ENCODE measurements at regions of chr5 and their contacts with region 1.

Region 1: GRCh38 chr5:179763215-179763945 is 30.4 kb upstream of the LTC4S start:
- DNase-seq: peak; percentile 77
- ATAC-seq: peak; percentile 82
- H3K4me3 ChIP-seq: no peak overlapping the region
- H3K27ac ChIP-seq: no peak overlapping the region
- H3K4me1 ChIP-seq: peaks cover 27% of the 10 kb centered on the region
- H3K27me3 ChIP-seq: no peaks in the 10 kb centered on the region
- CTCF ChIP-seq: peak; percentile 80
- EP300 ChIP-seq: no peak
- POLR2A ChIP-seq: no peak
- RAD21 ChIP-seq: peak; percentile 65

Region 2: GRCh38 chr5:179732417-179732917 is 30.9 kb before region 1 on chr5 and contains the start of gene MAML1:
- CTCF ChIA-PET with region 1: no interaction called
- POLR2A ChIA-PET with region 1: interaction called, 11 read pairs
- in situ Hi-C with region 1: no loop called
- intact Hi-C with region 1: no loop called
- DNase-seq: peak; percentile 99
- ATAC-seq: peak; percentile 94
- H3K4me3 ChIP-seq: peak within 1 kb of the TSS; percentile 93 to 98 (median 96)
- H3K27ac ChIP-seq: peak within 1 kb of the TSS; percentile 88
- H3K4me1 ChIP-seq: peaks cover 55% of the 10 kb centered on the region
- H3K27me3 ChIP-seq: no peaks in the 10 kb centered on the region
- CTCF ChIP-seq: no peak
- EP300 ChIP-seq: no peak
- POLR2A ChIP-seq: peak; percentile 51 to 61
- RAD21 ChIP-seq: no peak
- total RNA-seq, gene MAML1: 10.0 and 12.1 TPM in 2 replicates

Region 3: DNA sequence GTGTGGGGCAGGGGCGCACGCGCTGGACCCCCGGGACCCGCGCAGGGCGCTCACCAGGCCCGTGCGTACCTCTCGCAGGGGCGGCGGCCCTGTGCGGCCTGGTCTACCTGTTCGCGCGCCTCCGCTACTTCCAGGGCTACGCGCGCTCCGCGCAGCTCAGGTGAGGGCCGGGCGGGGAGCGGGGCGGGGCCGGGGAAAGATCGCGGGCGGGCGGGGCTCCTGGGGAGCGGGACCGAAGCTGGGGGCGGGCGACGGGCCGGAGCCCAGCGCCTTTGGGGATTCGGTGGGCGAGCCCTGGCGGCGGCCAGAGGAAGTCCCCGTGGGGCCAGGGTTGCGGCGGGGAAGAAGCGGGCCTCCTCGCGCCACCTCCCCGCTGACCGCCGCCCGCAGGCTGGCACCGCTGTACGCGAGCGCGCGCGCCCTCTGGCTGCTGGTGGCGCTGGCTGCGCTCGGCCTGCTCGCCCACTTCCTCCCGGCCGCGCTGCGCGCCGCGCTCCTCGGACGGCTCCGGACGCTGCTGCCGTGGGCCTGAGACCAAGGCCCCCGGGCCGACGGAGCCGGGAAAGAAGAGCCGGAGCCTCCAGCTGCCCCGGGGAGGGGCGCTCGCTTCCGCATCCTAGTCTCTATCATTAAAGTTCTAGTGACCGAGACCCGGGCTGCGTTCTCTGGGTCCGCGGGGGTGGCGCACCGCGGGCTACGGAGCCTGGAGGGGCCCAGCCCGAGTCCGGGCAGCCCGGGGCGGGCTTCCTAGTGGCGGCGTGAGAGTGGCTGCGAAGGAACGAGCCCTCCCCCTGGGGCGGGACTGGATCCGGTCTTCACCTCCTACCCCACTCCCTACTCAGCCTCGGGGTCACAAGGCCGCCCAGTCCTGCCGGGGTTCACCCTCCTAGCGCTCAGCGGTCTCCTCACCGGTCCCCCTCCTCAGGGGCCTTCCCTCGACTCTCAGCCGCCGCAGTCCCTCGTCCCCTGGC is 32.8 kb after region 1 on chr5:
- CTCF ChIA-PET with region 1: interaction called, 11 read pairs
- POLR2A ChIA-PET with region 1: interaction called, 5 read pairs
- in situ Hi-C with region 1: no loop called
- intact Hi-C with region 1: loop called (anchors 2 kb)
- DNase-seq: peak; percentile 63
- ATAC-seq: peak; percentile 67
- H3K4me3 ChIP-seq: peak overlapping the region; percentile 58 to 78 (median 76)
- H3K27ac ChIP-seq: peak overlapping the region; percentile 77
- H3K4me1 ChIP-seq: peaks cover 39% of the 10 kb centered on the region
- H3K27me3 ChIP-seq: no peaks in the 10 kb centered on the region
- CTCF ChIP-seq: peak; percentile 71; the same call in 1 of the 2 replicates
- EP300 ChIP-seq: no peak
- POLR2A ChIP-seq: 0 out of 4 replicates have a peak, but pooled peaks of 1 of the 2 experiments have one; percentile 25
- RAD21 ChIP-seq: peak; percentile 94

Region 4: DNA sequence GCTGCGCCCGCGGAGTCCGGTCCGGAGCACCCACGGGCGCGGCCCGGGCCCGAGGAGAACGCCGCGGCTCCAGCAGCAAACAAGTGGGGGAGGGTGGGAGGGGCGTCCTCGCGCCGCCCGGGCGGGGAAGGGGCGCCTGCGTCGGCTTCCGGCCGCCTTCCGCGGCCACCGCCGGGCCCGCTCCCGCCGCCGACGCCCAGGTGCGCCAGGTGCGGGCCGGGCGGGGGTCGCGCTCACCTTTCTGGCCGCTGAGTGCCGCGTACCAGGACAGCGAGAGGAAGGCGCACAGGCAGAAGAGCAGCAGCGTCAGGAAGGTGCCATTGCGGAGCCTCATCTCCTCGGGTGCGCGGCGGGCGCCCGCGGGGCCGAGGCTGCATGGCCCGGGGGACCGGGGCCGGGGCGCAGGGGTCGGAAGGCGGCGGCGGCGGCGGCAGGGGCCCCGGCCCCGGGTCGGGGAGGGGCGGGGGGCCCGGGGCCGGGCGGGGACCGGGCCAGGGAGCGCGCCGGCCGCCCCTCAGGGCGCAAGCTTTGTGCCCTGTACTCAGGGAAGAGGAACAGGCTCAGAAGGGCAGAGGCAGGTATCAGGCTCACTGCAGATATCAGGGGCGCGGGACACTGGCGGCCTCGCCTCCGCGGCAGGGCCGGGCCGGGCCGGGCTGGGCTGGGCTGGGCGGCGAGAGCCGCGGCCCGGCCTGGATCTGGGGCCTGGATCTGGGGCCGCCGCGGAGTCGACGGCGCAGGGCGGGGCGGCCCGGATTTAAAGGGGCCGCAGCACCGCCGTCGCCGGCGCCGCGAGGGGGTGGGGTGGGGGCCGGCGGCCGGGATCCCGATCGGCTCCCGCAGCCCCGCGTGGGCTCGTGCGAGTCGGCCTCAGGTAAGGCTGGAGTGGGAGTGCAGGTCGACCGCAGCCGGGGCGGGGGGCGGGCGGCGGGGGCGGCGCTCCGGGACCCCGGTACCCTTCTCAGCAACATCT is 43.2 kb after region 1 on chr5 and contains the start of gene MGAT4B:
- CTCF ChIA-PET with region 1: no interaction called
- POLR2A ChIA-PET with region 1: no interaction called
- in situ Hi-C with region 1: no loop called
- intact Hi-C with region 1: no loop called
- DNase-seq: no peak
- ATAC-seq: peak; percentile 63
- H3K4me3 ChIP-seq: peak within 1 kb of the TSS; percentile 60 to 95 (median 82)
- H3K27ac ChIP-seq: peak within 1 kb of the TSS; percentile 89
- H3K4me1 ChIP-seq: peaks cover 43% of the 10 kb centered on the region
- H3K27me3 ChIP-seq: no peaks in the 10 kb centered on the region
- CTCF ChIP-seq: no peak
- EP300 ChIP-seq: no peak
- POLR2A ChIP-seq: peak in 1 of 2 experiments; percentile 42; a peak in 1 of 4 replicates
- RAD21 ChIP-seq: peak; percentile 11; the same call in 1 of the 2 replicates
- total RNA-seq, gene MGAT4B: 69.2 and 93.5 TPM in 2 replicates

Region 5: GRCh38 chr5:179827680-179828079 is 64.3 kb after region 1 on chr5:
- CTCF ChIA-PET with region 1: interaction called, 3 read pairs
- POLR2A ChIA-PET with region 1: interaction called, 5 read pairs
- in situ Hi-C with region 1: no loop called
- intact Hi-C with region 1: loop called (anchors 1 kb)
- DNase-seq: no peak
- ATAC-seq: no peak
- H3K4me3 ChIP-seq: no peak overlapping the region
- H3K27ac ChIP-seq: peak overlapping the region; percentile 38
- H3K4me1 ChIP-seq: peaks cover 76% of the 10 kb centered on the region
- H3K27me3 ChIP-seq: no peaks in the 10 kb centered on the region
- CTCF ChIP-seq: 0 out of 2 replicates have a peak, but pooled peaks have one; percentile 7
- EP300 ChIP-seq: no peak
- POLR2A ChIP-seq: no peak; a peak in 1 of 4 replicates
- RAD21 ChIP-seq: no peak

Region 6: GRCh38 chr5:179907570-179908324 is 144.4 kb after region 1 on chr5 and contains the start of gene TBC1D9B:
- CTCF ChIA-PET with region 1: no interaction called
- POLR2A ChIA-PET with region 1: no interaction called
- in situ Hi-C with region 1: no loop called
- intact Hi-C with region 1: loop called (anchors 10 kb)
- DNase-seq: peak; percentile 27
- ATAC-seq: peak; percentile 87
- H3K4me3 ChIP-seq: peak within 1 kb of the TSS; percentile 82 to 86 (median 85)
- H3K27ac ChIP-seq: peak within 1 kb of the TSS; percentile 36
- H3K4me1 ChIP-seq: peaks cover 18% of the 10 kb centered on the region
- H3K27me3 ChIP-seq: 0 out of 5 replicates have a peak, but pooled peaks cover 0 to 4% of the 10 kb centered on the region in 2 experiments
- CTCF ChIP-seq: peak; percentile 36; the same call in 1 of the 2 replicates
- EP300 ChIP-seq: no peak
- POLR2A ChIP-seq: peak; percentile 63 to 68
- RAD21 ChIP-seq: no peak; the same call in 1 of the 2 replicates
- total RNA-seq, gene TBC1D9B: 26.8 and 35.0 TPM in 2 replicates

Region 7: DNA sequence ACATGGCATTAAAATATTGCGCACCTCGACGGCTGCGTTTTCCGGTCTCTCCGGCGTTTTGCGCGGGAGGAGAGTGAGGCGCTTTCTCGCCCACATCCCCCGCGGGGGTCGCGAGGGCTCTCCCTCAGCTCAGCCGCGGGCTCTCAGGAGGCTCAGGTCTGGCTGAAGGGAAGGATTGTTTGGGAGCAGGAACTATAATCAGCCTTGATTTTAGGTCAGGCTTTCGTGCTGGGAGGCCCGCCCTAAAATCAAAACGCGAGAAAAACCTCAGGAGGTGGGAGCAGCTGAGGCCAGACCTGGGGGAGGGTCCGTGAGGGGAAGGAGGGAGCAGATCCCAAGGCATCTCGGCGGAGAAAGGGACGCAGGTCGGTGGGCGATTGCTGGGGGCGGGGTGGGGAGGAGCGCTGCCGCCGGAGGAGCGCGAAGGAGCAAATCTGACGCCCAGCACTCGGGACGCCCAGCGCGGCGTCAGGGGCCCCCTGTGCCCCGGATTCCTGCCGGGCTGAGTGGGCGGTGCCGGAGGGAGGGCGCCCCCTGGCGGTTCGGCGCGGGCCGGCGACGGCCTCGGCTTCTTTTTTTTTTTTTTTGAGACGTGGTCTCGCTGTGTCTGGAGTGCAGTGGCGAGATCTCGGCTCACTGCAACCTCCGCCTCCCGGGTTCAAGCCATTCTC is 326.9 kb after region 1 on chr5:
- CTCF ChIA-PET with region 1: no interaction called
- POLR2A ChIA-PET with region 1: no interaction called
- in situ Hi-C with region 1: loop called (anchors 25 kb)
- intact Hi-C with region 1: loop called (anchors 1 kb)
- DNase-seq: peak; percentile 36
- ATAC-seq: peak; percentile 82
- H3K4me3 ChIP-seq: peak overlapping the region; percentile 34 to 59 (median 52); a peak in 4 of 6 replicates
- H3K27ac ChIP-seq: no peak overlapping the region
- H3K4me1 ChIP-seq: peaks cover 14% of the 10 kb centered on the region; the same call in 1 of the 2 replicates
- H3K27me3 ChIP-seq: peaks cover 1 to 4% of the 10 kb centered on the region in 2 experiments; a peak in 3 of 5 replicates
- CTCF ChIP-seq: peak; percentile 72
- EP300 ChIP-seq: no peak
- POLR2A ChIP-seq: no peak
- RAD21 ChIP-seq: no peak